SK-N-SH (cell line): ENCODE measurements at regions of chr3 and their contacts with region 1.

Region 1: DNA sequence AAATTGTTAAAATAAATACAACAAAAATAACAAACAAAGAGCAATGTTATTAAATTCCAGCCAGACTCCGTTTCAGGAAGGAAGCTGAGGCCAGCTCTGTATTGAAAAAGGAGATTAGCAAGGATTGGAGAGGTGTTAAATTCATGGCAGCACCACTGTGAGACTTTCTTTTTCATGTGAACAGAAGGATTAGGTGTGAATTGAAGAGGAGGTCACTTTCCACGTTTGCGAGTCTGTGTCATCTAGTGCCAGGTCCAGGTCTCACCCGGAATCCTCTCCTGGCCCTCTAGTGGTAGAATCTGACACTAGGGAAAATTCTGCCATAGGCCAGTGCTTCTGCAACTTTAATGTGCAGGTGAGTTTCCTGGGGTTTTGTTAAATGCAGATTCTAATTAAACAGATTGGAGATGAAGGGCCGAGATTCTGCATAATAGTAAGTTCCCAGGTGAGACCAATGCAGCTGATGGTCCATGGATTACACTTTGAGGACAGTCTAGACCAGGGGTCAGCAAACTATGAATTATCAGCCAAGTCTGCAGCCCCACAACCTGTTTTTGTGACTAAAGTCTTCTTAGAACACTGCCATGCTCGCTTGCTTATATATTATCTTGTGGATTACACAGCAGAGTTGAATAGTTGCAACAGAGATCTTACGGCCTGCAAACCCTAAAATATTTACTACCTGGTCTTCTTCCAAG is 9.2 kb upstream of the SLC6A1 start:
- DNase-seq: peak; percentile 78
- H3K4me3 ChIP-seq: no peak overlapping the region
- H3K27ac ChIP-seq: no peak overlapping the region
- H3K4me1 ChIP-seq: no peaks in the 10 kb centered on the region
- H3K27me3 ChIP-seq: no peaks in the 10 kb centered on the region
- CTCF ChIP-seq: peak; percentile 80
- EP300 ChIP-seq: no peak
- RAD21 ChIP-seq: peak; percentile 62

Region 2: GRCh38 chr3:10758304-10759061 is 224.9 kb before region 1 on chr3:
- CTCF ChIA-PET with region 1: interaction called, 18 read pairs
- POLR2A ChIA-PET with region 1: no interaction called
- DNase-seq: peak; percentile 86
- H3K4me3 ChIP-seq: no peak overlapping the region
- H3K27ac ChIP-seq: no peak overlapping the region
- H3K4me1 ChIP-seq: no peaks in the 10 kb centered on the region; a peak in 1 of 4 replicates
- H3K27me3 ChIP-seq: no peaks in the 10 kb centered on the region
- CTCF ChIP-seq: peak; percentile 67
- EP300 ChIP-seq: no peak
- RAD21 ChIP-seq: peak; percentile 94

Region 3: DNA sequence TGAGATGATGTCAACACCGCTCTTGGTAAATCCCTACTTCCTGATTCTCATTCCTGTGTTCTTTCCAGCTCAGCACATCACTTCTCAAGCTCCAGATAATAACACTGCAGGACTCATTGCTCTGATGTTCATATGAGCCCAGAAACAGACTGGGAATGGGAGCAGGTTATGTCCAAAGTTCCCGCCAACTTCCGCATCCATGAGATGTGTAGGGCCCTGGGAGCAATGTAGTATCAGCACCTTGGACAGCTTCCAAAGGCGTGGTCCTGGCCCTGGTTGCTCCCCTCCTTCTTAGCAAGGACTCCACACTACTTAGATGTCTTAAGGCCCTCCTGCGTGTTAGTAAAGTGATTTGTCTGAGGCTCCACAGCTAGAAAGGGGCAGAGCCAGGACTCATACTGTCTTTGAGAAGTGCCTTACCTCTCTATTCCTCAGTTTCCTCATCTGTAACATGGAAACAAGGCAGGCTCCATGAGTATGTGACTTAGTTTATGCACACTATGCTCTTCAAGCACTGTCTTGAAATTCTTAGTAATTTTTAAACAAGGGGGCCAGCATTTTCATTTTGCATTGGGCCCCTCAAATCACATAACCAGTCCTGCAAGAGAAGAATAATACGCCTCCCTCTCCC is 18.7 kb before region 1 on chr3:
- CTCF ChIA-PET with region 1: interaction called, 21 read pairs
- POLR2A ChIA-PET with region 1: no interaction called
- DNase-seq: no peak
- H3K4me3 ChIP-seq: no peak overlapping the region
- H3K27ac ChIP-seq: no peak overlapping the region
- H3K4me1 ChIP-seq: peaks cover 0 to 7% of the 10 kb centered on the region in 2 experiments; a peak in 1 of 4 replicates
- H3K27me3 ChIP-seq: no peaks in the 10 kb centered on the region
- CTCF ChIP-seq: no peak
- EP300 ChIP-seq: no peak
- RAD21 ChIP-seq: no peak

Region 4: DNA sequence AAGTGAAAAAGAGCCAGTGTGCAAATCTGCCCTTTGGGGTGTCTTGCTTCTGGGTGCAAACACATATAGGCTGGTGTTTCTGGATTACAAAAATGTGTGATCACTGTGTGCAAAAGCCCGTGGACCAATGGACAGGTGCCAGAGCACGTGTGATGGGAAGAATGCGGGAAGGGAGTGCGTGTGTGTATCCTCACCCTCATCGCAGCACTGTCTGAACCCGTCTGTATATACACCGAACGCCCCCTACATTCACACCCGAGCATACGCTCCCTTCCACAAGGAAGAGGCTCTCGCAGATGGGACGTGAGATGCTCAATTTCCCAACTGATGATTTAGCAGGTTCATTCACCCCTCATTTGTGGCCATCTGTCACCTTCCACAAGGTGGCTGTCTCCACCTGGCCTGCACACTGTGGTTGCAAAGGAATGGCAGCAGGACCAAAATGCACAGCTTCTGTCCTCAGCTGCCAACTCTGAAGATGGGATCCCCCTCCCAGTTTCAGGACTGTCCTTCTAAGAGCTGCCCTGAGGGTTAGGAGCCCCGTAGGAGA is 10.2 kb before region 1 on chr3:
- CTCF ChIA-PET with region 1: interaction called, 12 read pairs
- POLR2A ChIA-PET with region 1: interaction called, 3 read pairs
- DNase-seq: no peak
- H3K4me3 ChIP-seq: no peak overlapping the region
- H3K27ac ChIP-seq: no peak overlapping the region
- H3K4me1 ChIP-seq: peaks cover 0 to 5% of the 10 kb centered on the region in 2 experiments; a peak in 1 of 4 replicates
- H3K27me3 ChIP-seq: no peaks in the 10 kb centered on the region
- CTCF ChIP-seq: no peak
- EP300 ChIP-seq: no peak
- RAD21 ChIP-seq: no peak

Region 5: DNA sequence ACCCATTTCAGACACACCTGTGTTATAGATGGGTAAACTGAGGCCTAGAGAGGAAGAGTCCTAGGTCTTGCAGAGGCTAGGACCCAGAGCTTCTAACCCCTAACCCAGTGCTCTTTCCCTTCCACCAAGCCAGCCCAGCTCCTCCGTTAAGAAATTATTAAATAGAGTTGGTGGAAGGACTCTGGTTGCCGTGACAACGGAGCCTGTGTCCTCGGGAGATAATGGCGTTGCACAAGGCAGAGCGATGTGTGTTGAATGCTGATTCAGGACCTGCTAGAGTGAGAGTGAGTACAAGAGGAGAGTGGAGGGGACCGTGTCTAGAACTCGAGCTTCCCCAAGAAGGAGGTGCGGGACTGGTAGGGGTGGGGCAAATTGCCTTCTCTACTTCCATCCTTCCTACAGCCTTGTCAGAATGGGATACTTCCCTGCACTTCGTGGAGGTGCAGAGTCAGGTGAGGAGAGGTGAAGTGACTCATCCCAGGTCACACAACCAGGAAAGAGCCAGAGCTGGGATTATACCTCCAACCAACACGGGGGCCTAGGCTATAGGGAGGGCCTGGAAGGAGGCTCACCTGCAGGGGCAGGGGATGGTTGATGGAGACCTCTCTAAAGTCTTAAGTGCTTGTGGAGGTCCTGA is 17.8 kb after region 1 on chr3:
- CTCF ChIA-PET with region 1: interaction called, 10 read pairs
- POLR2A ChIA-PET with region 1: no interaction called
- DNase-seq: peak; percentile 64
- H3K4me3 ChIP-seq: no peak overlapping the region
- H3K27ac ChIP-seq: no peak overlapping the region
- H3K4me1 ChIP-seq: peaks cover 0 to 9% of the 10 kb centered on the region in 2 experiments; a peak in 1 of 4 replicates
- H3K27me3 ChIP-seq: peaks cover 23% of the 10 kb centered on the region
- CTCF ChIP-seq: no peak
- EP300 ChIP-seq: no peak
- RAD21 ChIP-seq: no peak

Region 6: DNA sequence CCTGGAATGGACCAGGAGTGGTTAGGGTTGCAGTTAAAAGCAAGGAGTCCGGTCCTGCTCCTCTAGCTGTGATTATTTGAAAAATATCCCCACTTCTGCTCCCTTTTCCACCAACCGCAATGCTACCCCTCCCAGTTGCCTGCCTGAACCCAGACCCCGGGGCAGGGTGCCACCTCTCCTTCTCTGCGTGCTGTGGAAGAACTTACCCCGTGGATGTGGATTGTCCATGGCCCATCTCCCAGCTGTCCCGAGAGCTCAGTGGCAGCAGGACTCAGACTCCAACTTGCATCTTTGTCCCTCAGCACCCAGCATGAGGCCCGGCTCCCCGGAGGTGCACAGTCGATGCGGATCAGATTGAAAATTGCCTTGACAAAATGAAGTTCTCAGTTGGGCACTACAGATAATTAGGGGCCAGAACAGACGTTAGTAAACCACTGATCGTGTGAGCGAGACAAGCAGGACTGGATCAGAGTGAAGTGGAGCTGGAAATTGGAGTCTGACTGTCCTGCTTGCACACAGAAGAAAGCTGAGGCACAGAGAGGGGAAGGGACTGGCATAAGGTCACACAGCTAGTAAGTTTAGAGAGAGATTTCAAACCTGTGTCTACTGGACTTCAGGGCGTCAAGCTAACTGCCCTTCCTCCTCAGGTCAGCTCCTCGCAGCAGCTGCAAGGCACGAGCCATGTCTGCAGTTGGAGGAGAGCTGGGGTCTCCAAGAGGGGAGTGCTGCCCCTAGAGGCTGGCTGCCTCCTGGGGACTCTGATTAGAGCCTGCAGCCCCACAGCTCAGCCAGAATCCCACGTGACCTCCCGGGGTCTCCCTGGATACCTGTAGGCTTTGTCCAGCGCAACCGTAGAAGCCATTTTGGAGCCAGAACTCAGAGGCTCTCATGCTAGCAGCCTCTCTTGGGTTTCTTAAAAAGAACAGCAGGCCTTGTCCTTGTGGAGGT is 23.9 kb after region 1 on chr3:
- CTCF ChIA-PET with region 1: interaction called, 12 read pairs
- POLR2A ChIA-PET with region 1: no interaction called
- DNase-seq: peak; percentile 46
- H3K4me3 ChIP-seq: no peak overlapping the region
- H3K27ac ChIP-seq: no peak overlapping the region
- H3K4me1 ChIP-seq: no peaks in the 10 kb centered on the region; a peak in 1 of 4 replicates
- H3K27me3 ChIP-seq: peaks cover 10% of the 10 kb centered on the region
- CTCF ChIP-seq: no peak
- EP300 ChIP-seq: no peak
- RAD21 ChIP-seq: no peak

Region 7: GRCh38 chr3:11211531-11212298 is 228.3 kb after region 1 on chr3:
- CTCF ChIA-PET with region 1: no interaction called
- POLR2A ChIA-PET with region 1: no interaction called
- DNase-seq: no peak
- H3K4me3 ChIP-seq: peak overlapping the region; percentile 10 to 26; a peak in 3 of 4 replicates
- H3K27ac ChIP-seq: peak overlapping the region; percentile 80 to 97; a peak in 3 of 4 replicates
- H3K4me1 ChIP-seq: peaks cover 2 to 16% of the 10 kb centered on the region in 2 experiments; a peak in 2 of 4 replicates
- H3K27me3 ChIP-seq: no peaks in the 10 kb centered on the region
- CTCF ChIP-seq: peak; percentile 51
- EP300 ChIP-seq: no peak
- RAD21 ChIP-seq: peak; percentile 30; the same call in 1 of the 2 replicates